OCI-LY7 (cell line): ENCODE measurements at regions of chr2 and their contacts with region 1.

Region 1: DNA sequence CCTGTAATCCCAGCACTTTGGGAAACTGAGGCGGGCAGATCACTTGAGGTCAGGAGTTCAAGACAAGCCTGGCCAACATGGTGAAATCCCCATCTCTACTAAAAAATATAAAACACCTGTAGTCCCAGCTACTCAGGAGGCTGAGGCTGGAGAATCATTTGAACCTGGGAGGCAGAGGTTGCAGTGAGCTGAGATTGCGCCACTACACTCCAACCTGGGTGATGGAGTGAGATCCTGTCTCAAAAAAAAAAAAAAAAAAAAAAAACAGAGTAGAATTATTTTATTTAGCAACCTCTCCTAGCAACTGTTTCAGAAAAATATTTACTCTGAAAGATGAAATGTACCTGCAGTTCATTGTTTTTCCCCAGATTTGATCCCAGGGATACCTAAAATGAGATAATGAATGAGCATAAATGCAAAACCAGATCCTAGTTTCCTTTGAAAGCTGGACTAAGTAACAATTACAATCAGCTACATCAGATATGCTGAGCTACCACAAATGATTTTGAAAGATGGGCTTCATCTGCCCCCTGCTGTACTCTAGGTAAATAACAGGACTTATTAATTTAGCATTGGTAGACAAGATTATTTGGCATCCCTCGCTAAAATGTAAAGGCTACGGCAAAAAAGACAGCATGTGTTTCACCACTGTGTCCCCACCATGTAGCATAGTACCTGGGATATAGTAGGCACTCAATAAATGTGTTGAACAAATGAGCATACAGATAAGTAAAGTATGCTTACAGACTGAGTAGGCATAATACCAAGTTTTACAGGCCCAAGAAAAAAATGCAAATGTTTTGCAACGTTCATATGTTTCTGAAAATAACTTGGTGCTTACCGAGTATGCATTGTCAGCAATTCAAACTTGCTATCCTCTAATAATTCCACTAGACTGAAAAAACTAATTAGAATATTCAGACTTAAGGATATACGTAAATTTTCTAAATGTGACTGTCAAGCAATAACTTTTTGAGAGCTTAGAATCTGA is 102.5 kb downstream of the ATL2 start:
- DNase-seq: peak; percentile 73
- H3K4me3 ChIP-seq: no peak overlapping the region
- H3K27ac ChIP-seq: no peak overlapping the region
- H3K4me1 ChIP-seq: peaks cover 4% of the 10 kb centered on the region
- CTCF ChIP-seq: peak; percentile 88

Region 2: GRCh38 chr2:37896314-37896713 is 378.3 kb before region 1 on chr2:
- CTCF ChIA-PET with region 1: no interaction called
- POLR2A ChIA-PET with region 1: no interaction called
- intact Hi-C with region 1: loop called (anchors 5 kb)
- DNase-seq: peak; percentile 39
- H3K4me3 ChIP-seq: no peak overlapping the region
- H3K27ac ChIP-seq: no peak overlapping the region
- H3K4me1 ChIP-seq: peaks cover 18% of the 10 kb centered on the region
- CTCF ChIP-seq: peak; percentile 56

Region 3: GRCh38 chr2:37982147-37982582 is 292.4 kb before region 1 on chr2:
- CTCF ChIA-PET with region 1: no interaction called
- POLR2A ChIA-PET with region 1: no interaction called
- intact Hi-C with region 1: loop called (anchors 2 kb)
- DNase-seq: peak; percentile 70
- H3K4me3 ChIP-seq: no peak overlapping the region
- H3K27ac ChIP-seq: no peak overlapping the region
- H3K4me1 ChIP-seq: no peaks in the 10 kb centered on the region
- CTCF ChIP-seq: peak; percentile 99

Region 4: DNA sequence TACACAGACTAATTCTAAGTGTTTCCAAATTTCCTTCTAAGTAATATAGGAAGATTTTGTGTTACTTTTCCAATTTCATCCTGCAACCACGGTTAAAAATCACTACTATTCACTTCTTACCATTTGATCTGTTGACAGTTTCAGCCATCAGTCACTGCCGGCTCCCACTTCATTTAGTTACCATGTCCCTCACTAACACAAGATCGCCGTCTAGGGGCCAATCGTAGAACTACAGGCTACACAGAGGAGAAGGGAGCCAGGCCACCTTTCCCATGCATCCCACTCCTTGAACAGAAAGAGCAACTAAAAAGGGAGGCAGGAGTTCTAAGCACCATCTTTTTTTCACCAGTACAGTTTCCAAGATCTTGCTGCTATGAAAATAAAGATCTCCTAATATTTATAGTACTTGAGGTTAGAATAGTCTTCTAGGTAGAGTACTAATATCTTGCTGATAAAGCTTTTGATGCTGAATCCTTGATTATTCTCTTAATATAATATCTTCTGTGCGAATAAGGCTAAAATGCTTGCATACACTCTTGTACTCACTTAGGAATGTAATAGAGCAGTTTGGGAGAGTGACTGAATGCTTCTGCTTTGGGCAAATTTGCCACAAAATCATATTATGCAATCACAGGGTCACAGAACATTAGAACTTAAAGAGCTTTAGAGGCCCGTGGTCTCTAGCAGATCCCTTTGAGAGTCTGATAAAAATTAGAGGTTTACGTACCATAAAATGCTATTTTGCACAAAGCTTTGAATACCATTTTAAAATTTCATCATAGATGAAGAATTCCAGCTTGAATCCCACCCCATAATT is 159.2 kb before region 1 on chr2:
- CTCF ChIA-PET with region 1: no interaction called
- POLR2A ChIA-PET with region 1: no interaction called
- intact Hi-C with region 1: loop called (anchors 2 kb)
- DNase-seq: peak; percentile 65
- H3K4me3 ChIP-seq: no peak overlapping the region
- H3K27ac ChIP-seq: no peak overlapping the region
- H3K4me1 ChIP-seq: no peaks in the 10 kb centered on the region
- CTCF ChIP-seq: peak; percentile 97

Region 5: DNA sequence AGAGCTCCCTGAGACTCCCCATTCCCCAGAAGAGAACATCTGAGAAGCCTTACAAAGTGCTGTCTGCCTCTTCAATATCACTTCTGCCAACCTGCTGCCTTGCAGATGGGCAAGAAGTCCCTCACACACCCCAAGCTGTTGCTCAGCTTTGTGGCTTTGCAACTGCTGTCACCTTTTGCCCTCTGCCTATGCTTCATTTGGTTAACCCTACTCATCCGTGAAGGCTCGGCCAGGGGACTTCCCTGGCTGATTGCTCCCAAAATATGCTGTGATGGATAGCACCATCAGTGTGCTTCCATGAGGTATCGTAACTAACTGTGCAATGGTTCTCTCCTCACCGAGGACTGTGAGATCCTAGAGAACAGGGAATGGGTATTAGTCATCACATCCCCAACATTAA is 109.7 kb before region 1 on chr2:
- CTCF ChIA-PET with region 1: no interaction called
- POLR2A ChIA-PET with region 1: no interaction called
- intact Hi-C with region 1: loop called (anchors 5 kb)
- DNase-seq: no peak
- H3K4me3 ChIP-seq: no peak overlapping the region
- H3K27ac ChIP-seq: no peak overlapping the region
- H3K4me1 ChIP-seq: no peaks in the 10 kb centered on the region
- CTCF ChIP-seq: no peak

Region 6: DNA sequence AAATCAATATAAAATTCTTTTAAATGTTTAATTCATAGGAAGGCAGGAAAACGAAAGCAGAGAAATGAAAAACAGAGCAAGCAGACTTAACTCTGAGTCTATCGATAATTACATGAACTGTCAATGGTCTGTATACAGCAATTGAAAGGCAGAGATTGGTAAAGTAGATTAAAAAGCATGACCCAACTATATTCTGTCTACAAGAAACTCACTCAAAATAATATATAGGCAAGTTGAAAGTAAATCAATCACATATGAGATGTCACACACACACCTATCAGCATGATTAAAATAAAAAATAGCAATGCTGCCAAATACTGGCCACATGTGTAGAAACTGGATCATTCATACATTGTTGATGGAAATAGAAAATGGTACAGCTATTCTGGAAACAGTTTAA is 62.3 kb before region 1 on chr2:
- CTCF ChIA-PET with region 1: no interaction called
- POLR2A ChIA-PET with region 1: interaction called, 10 read pairs
- intact Hi-C with region 1: no loop called
- DNase-seq: no peak
- H3K4me3 ChIP-seq: no peak overlapping the region
- H3K27ac ChIP-seq: no peak overlapping the region
- H3K4me1 ChIP-seq: no peaks in the 10 kb centered on the region
- CTCF ChIP-seq: no peak

Region 7: GRCh38 chr2:38508311-38509039 is 233.9 kb after region 1 on chr2:
- CTCF ChIA-PET with region 1: interaction called, 3 read pairs
- POLR2A ChIA-PET with region 1: no interaction called
- intact Hi-C with region 1: loop called (anchors 1 kb)
- DNase-seq: peak; percentile 94
- H3K4me3 ChIP-seq: no peak overlapping the region
- H3K27ac ChIP-seq: no peak overlapping the region
- H3K4me1 ChIP-seq: peaks cover 12% of the 10 kb centered on the region
- CTCF ChIP-seq: peak; percentile 98